Mammary epithelial cell (primary cell): ENCODE measurements at regions of chr10 and their contacts with region 1.

Region 1: GRCh38 chr10:114304017-114304570 is 65.0 kb downstream of the VWA2 start:
- DNase-seq: peak; percentile 60
- H3K4me3 ChIP-seq: no peak overlapping the region
- H3K27ac ChIP-seq: no peak overlapping the region
- H3K4me1 ChIP-seq: peaks cover 46% of the 10 kb centered on the region
- H3K27me3 ChIP-seq: no peaks in the 10 kb centered on the region
- CTCF ChIP-seq: peak; percentile 67 to 76

Region 2: DNA sequence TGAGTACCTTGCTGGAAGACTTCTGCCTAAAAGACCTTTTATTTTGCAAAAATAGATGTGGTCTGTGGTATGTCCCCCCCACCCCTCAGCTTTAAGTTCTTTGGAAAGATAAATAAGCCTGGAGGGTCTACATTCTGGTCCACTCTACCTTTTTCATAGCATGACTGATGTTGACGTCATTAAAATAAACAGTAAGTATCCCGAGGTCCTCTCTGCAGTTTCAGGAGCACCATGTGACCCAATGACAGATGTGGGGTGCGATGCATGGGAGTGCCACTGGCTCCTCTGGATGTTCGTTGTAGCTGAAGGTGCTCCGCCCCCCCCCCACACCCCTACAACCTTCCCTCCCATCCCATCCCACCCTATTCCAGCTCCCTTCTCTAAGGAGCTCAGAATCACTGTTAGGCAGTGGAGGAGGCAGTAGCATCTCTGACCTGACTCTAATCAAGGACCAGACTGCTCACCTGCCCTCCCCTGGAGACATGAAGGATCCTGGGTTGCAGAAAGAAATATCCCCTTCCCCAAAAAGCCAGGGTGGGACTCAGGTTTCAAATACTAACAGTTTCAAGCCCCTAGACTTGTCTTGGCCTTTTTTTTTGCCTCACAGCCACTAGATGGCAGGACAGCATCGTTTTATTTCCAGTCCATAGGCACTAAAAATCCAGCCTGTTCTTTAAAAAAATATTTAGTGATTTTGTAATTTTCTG is 599.3 kb before region 1 on chr10:
- CTCF ChIA-PET with region 1: no interaction called
- dilution Hi-C with region 1: no loop called
- in situ Hi-C with region 1: no loop called
- intact Hi-C with region 1: loop called (anchors 10 kb)
- DNase-seq: peak; percentile 4
- H3K4me3 ChIP-seq: no peak overlapping the region
- H3K27ac ChIP-seq: no peak overlapping the region
- H3K4me1 ChIP-seq: peaks cover 4% of the 10 kb centered on the region
- H3K27me3 ChIP-seq: no peaks in the 10 kb centered on the region
- CTCF ChIP-seq: peak; percentile 64 to 67

Region 3: DNA sequence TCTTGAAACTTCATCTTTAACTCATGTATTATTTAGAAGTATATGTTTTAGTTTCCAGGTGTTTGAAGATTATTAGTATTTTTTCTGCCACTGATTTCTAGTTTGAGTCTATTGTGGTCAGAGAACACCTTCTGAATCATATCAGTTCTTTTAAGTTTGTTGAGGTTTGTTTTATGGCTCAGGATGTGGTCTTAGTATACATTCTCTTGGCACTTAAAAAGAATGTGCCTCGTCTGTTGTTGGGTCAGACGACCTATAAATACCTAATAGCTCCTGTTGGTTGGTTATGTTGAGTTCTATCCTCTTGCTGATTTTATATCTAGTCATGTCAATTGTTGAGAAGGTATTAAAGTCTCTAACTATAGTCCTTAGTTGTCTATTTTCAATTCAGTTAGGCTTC is 109.0 kb before region 1 on chr10:
- CTCF ChIA-PET with region 1: no interaction called
- dilution Hi-C with region 1: loop called (anchors 5 kb)
- in situ Hi-C with region 1: no loop called
- intact Hi-C with region 1: no loop called
- DNase-seq: peak; percentile 66
- H3K4me3 ChIP-seq: no peak overlapping the region
- H3K27ac ChIP-seq: no peak overlapping the region
- H3K4me1 ChIP-seq: peaks cover 7% of the 10 kb centered on the region
- H3K27me3 ChIP-seq: peaks cover 11% of the 10 kb centered on the region
- CTCF ChIP-seq: no peak

Region 4: GRCh38 chr10:114397651-114398145 is 93.6 kb after region 1 on chr10:
- CTCF ChIA-PET with region 1: no interaction called
- dilution Hi-C with region 1: no loop called
- in situ Hi-C with region 1: loop called (anchors 10 kb)
- intact Hi-C with region 1: no loop called
- DNase-seq: peak; percentile 83
- H3K4me3 ChIP-seq: peak overlapping the region; percentile 5 to 9 (median 9)
- H3K27ac ChIP-seq: peak overlapping the region; percentile 49
- H3K4me1 ChIP-seq: peaks cover 86% of the 10 kb centered on the region
- H3K27me3 ChIP-seq: no peaks in the 10 kb centered on the region
- CTCF ChIP-seq: peak; percentile 9 to 22

Region 5: DNA sequence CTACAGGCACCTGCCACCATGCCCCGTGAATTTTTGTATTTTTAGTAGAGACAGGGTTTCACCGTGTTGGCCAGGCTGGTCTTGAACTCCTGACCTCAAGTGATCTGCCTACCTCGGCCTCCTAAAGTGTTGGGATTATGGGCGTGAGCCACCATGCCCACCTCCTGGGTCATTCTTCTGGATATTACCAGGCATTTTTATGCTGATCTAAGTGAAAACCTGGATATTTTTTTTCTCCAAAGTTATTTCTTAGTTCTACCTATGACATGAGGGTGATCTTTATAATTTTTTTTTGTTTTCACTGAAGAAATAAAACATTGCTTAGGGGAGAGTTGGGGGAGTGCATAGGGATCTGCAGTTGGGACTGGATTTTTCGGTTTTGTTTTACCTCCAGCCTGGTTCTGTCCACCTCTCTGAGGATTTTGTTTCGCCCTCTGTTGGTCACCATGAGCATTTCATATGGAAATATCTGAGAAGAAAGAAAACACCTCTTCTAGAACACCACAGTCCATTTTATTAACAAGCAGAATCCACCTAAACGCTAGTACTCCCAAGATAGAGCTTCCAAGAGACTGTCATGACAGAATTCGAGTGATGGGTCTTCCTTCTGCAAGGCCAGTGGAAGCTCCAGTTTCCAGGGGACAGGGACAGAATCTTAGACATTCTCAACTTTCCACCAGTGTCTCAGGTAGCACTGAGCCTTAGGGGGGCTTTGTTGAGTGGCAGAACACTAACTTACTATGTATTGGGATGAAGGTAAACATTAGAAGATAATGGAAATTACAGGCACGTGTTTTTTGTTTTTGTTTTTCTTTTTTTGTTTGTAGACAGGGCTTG is 133.6 kb after region 1 on chr10:
- CTCF ChIA-PET with region 1: interaction called, 4 read pairs
- dilution Hi-C with region 1: loop called (anchors 5 kb)
- in situ Hi-C with region 1: loop called in 1 of 2 experiments (anchors 10 kb)
- intact Hi-C with region 1: loop called (anchors 1 kb)
- DNase-seq: peak; percentile 26
- H3K4me3 ChIP-seq: no peak overlapping the region
- H3K27ac ChIP-seq: no peak overlapping the region
- H3K4me1 ChIP-seq: no peaks in the 10 kb centered on the region
- H3K27me3 ChIP-seq: no peaks in the 10 kb centered on the region
- CTCF ChIP-seq: peak; percentile 49 to 61

Region 6: DNA sequence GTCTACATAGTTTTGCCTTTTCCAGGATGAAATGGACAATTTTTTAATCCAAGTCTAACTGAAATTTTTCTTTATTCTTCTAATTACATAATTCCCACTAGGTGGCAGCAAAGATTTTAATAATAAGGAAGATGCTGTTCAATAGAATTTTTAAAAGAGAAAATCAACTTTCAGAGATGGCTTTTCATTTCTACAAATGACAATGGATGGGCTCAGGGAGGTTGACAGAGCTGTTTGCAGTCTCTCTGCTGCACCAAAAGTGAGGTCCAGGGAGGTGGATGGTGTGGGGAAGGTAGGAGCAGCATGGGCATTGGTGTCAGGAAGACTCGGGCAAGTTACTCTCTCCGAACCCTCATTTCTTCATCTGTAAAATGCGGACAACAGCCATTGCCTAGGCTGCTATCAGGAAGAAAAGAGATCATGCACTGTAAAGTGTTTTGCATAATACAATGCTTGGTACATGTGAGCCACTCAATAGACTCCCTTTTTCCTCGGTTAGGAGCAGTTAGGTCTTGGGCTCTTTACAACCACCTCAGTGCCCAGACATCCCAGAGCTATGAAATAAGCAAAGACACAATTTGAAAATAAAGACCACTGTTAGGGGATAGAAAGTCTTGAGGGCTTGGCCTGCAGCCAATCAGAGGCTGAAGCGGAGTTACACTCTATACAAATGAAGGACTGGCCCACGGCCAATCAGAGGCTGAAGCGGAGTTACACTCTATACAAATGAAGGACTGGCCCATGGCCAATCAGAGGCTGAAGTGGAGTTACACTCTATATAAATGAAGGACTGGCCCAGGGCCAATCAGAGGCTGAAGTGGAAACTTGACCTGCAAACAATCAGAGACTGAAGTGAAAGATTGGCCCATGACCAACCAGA is 246.9 kb after region 1 on chr10:
- CTCF ChIA-PET with region 1: no interaction called
- dilution Hi-C with region 1: no loop called
- in situ Hi-C with region 1: no loop called
- intact Hi-C with region 1: loop called (anchors 1 kb)
- DNase-seq: no peak
- H3K4me3 ChIP-seq: no peak overlapping the region
- H3K27ac ChIP-seq: no peak overlapping the region
- H3K4me1 ChIP-seq: peaks cover 7% of the 10 kb centered on the region
- H3K27me3 ChIP-seq: no peaks in the 10 kb centered on the region
- CTCF ChIP-seq: peak; percentile 25 to 36